ENCODE measurements at regions of chrX and their contacts with region 1.

Region 1: GRCh38 chrX:120629667-120630537 is at the start of gene C1GALT1C1:
- DNase-seq: peak; percentile 92
- H3K4me3 Mint-ChIP-seq: peak within 1 kb of the TSS; percentile 96
- H3K27ac Mint-ChIP-seq: peak within 1 kb of the TSS; percentile 99
- H3K4me1 Mint-ChIP-seq: peaks cover 26% of the 10 kb centered on the region
- H3K27me3 Mint-ChIP-seq: no peaks in the 10 kb centered on the region
- total RNA-seq, gene C1GALT1C1: 11.7 TPM

Region 2: GRCh38 chrX:120485638-120486520 is 144.0 kb before region 1 on chrX:
- CTCF ChIA-PET with region 1: no interaction called
- intact Hi-C with region 1: loop called (anchors 1 kb)
- DNase-seq: peak; percentile 63
- H3K4me3 Mint-ChIP-seq: peak overlapping the region; percentile 68
- H3K27ac Mint-ChIP-seq: peak overlapping the region; percentile 83
- H3K4me1 Mint-ChIP-seq: peaks cover 27% of the 10 kb centered on the region
- H3K27me3 Mint-ChIP-seq: no peaks in the 10 kb centered on the region

Region 3: GRCh38 chrX:120549483-120550452 is 80.1 kb before region 1 on chrX:
- CTCF ChIA-PET with region 1: no interaction called
- intact Hi-C with region 1: loop called (anchors 2 kb)
- DNase-seq: peak; percentile 56
- H3K4me3 Mint-ChIP-seq: no peak overlapping the region
- H3K27ac Mint-ChIP-seq: peak overlapping the region; percentile 32
- H3K4me1 Mint-ChIP-seq: peaks cover 26% of the 10 kb centered on the region
- H3K27me3 Mint-ChIP-seq: no peaks in the 10 kb centered on the region

Region 4: DNA sequence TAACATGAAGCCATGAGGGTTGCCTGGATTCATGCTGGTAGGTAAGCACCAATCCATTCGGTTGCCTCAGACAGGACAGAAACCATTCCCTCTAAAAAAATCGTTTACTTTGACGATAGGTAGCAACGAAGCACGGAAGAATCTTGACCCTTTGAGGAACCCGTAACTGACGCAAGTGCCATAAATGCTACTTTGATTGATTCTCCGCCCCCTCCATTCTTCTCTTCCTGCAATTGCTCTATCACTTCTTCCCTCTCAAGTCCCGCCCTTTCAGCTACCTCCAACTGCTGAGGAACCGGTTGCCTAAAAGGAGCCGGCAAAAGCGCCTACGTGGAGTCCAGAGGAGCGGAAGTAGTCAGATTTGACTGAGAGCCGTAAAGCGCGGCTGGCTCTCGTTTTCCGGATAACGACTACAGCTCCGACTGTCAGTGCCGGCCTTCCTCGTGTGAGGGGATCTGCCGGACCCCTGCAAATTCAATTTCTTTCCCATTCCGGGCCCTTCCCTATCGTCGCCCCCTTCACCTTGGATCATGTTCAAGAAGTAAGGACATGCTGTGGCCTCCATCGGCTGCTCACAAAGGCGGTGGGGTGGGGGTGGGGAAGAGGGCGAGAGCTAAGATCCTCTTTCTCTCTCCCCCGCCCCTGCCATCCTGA is 26.1 kb before region 1 on chrX and contains the start of gene MCTS1:
- CTCF ChIA-PET with region 1: no interaction called
- intact Hi-C with region 1: loop called (anchors 1 kb)
- DNase-seq: peak; percentile 86
- H3K4me3 Mint-ChIP-seq: peak within 1 kb of the TSS; percentile 95
- H3K27ac Mint-ChIP-seq: peak within 1 kb of the TSS; percentile 98
- H3K4me1 Mint-ChIP-seq: peaks cover 7% of the 10 kb centered on the region
- H3K27me3 Mint-ChIP-seq: no peaks in the 10 kb centered on the region
- total RNA-seq, gene MCTS1: 58.6 to 63.4 TPM

Region 5: DNA sequence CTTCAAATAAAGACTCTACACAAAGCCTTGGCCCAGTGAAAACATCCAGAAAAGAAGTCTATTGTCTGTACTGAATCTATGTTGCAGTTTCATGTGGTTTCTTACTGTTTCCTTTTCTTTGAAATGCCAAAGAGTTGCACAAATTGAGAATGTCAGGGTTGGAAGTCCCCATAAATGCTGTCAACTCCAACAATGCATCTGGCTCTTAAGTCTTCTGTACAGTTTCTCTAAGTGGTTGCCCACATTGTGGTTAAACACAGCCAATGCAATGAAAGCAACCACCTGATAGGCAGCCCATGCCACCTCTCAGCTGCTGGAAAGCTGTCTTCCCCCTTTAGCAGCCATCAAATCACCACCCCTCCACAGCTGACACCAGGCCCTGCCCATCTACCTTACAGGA is 67.2 kb after region 1 on chrX:
- CTCF ChIA-PET with region 1: no interaction called
- intact Hi-C with region 1: loop called (anchors 1 kb)
- DNase-seq: peak; percentile 69
- H3K4me3 Mint-ChIP-seq: no peak overlapping the region
- H3K27ac Mint-ChIP-seq: peak overlapping the region; percentile 83
- H3K4me1 Mint-ChIP-seq: peaks cover 27% of the 10 kb centered on the region
- H3K27me3 Mint-ChIP-seq: no peaks in the 10 kb centered on the region

Region 6: GRCh38 chrX:120755066-120755846 is 125.4 kb after region 1 on chrX:
- CTCF ChIA-PET with region 1: no interaction called
- intact Hi-C with region 1: loop called (anchors 1 kb)
- DNase-seq: peak; percentile 40
- H3K4me3 Mint-ChIP-seq: no peak overlapping the region
- H3K27ac Mint-ChIP-seq: peak overlapping the region; percentile 67
- H3K4me1 Mint-ChIP-seq: peaks cover 45% of the 10 kb centered on the region
- H3K27me3 Mint-ChIP-seq: no peaks in the 10 kb centered on the region

Region 7: GRCh38 chrX:121389976-121390714 is 760.2 kb after region 1 on chrX:
- CTCF ChIA-PET with region 1: no interaction called
- intact Hi-C with region 1: no loop called
- DNase-seq: no peak
- H3K4me3 Mint-ChIP-seq: no peak overlapping the region
- H3K27ac Mint-ChIP-seq: no peak overlapping the region
- H3K4me1 Mint-ChIP-seq: no peaks in the 10 kb centered on the region
- H3K27me3 Mint-ChIP-seq: no peaks in the 10 kb centered on the region